Kidney (tissue), 22 donors: ENCODE measurements at regions of chr4 and their contacts with region 1.

Region 1: GRCh38 chr4:87848622-87849351 is 16.0 kb downstream of the MEPE start:
- DNase-seq: peak in 3 of 5 donors; percentile 38 to 72 (median 59)
- H3K4me3 ChIP-seq: peak overlapping the region in 2 of 3 donors; percentile 45 to 67
- H3K27ac ChIP-seq: peak overlapping the region in 1 of 2 donors; percentile 38
- H3K4me1 ChIP-seq: peaks cover 0 to 8% (median 6%) of the 10 kb centered on the region in 3 donors
- H3K27me3 ChIP-seq: no peaks in the 10 kb centered on the region
- CTCF ChIP-seq: peak; percentile 71

Region 2: DNA sequence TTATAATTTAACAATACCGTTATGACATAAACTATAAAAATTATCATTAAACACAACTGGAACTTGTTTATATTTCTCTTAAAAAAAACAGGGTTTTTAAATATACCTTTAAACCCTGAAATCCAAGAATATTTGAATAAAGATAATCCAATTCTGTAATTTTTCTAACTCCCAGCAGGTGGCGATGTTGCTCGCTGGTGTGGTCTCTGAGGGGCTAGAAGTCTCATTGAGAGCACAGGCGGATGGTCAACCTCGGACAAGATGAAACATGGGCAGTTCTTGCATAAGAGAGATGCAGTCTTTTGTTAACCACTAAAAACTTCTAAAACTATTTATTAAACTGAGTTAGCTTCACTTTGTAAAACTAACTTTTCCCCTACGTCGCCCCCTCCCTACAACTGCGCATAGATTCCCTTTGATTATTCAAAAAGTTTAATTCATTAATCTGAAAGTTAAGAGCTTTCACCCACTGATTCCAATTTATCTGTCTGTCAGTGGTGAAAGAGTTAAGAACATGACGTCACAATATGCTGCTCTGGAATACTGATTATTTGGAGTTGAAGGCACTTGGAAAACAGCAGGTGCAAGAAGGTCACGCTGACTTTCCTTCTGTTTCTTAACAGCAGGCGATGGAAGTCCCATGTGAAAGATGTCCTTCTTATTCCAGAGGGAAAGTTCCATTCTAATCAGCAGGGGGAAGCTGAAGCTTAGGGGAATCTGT is 169.2 kb before region 1 on chr4:
- intact Hi-C with region 1: loop called (anchors 10 kb)
- DNase-seq: peak in 4 of 5 donors; percentile 38 to 77 (median 56)
- H3K4me3 ChIP-seq: no peak overlapping the region
- H3K27ac ChIP-seq: no peak overlapping the region
- H3K4me1 ChIP-seq: no peaks in the 10 kb centered on the region
- H3K27me3 ChIP-seq: no peaks in the 10 kb centered on the region
- CTCF ChIP-seq: peak; percentile 64

Region 3: DNA sequence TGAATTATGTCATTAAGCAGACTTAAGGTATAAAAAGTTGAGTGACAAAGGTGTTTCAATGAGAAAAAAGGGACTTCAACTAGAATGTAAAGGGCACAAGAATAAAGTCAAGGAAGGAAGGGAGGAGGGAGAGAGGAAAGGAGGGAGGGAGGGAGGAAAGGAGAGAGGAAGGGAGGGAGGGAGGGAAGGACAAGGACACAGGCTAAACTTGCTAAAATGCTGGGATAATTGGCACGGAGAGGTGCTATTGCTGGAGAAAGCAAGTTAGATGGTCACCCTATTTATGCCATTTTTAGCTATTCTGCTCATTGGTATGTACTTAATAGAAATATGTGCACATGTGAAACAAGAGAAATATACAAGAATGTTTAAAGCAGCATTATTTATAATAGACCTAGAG is 81.8 kb after region 1 on chr4:
- intact Hi-C with region 1: no loop called
- DNase-seq: no peak
- H3K4me3 ChIP-seq: no peak overlapping the region
- H3K27ac ChIP-seq: no peak overlapping the region
- H3K4me1 ChIP-seq: no peaks in the 10 kb centered on the region
- H3K27me3 ChIP-seq: no peaks in the 10 kb centered on the region
- CTCF ChIP-seq: no peak

Region 4: DNA sequence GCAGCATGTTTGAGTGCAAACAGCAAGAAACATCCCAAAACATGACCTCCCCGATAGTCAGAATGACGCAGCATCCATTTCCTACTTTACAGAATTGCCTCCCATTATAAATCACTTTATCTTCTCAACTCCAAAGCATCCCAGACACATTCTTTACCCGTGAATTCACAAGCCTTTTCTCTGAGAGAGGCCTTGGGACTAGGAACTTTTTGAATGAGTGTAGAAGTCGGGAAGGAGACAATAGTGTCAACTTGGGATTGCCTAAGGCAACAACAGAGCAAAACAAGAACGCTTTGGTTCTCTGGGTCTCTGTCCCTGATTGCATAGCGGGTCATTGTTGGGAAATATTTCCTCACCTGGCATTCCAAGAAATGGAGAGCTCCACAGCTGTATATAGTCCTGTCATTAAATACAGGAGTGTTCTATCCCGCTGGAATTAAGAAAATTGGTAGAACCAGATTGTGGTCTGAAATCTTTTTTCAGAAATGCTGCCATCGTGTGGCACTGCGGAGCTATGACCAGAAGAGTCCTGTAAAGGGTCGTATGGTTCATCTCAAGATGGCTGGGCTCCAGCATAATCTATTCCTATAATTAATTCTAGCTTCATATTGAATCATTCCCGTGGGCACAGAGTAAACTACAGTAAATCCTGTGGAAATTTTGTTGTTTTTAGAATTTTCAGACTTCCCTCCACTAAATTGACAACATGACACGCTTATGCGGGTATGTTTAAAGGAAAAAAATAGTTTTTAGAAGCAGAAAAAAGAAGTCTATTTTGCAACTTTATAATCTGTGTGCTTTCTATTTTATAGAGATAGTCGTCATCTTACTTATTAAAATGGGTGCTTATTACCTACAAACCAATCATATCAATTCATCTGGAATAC is 124.7 kb after region 1 on chr4:
- intact Hi-C with region 1: loop called (anchors 10 kb)
- DNase-seq: peak in 4 of 5 donors; percentile 55 to 79 (median 68)
- H3K4me3 ChIP-seq: peak overlapping the region in 2 of 3 donors; percentile 7 to 44
- H3K27ac ChIP-seq: peak overlapping the region in 1 of 2 donors; percentile 55
- H3K4me1 ChIP-seq: peaks cover 0 to 18% (median 0%) of the 10 kb centered on the region in 3 donors
- H3K27me3 ChIP-seq: peaks cover 5% of the 10 kb centered on the region
- CTCF ChIP-seq: peak; percentile 74

Region 5: DNA sequence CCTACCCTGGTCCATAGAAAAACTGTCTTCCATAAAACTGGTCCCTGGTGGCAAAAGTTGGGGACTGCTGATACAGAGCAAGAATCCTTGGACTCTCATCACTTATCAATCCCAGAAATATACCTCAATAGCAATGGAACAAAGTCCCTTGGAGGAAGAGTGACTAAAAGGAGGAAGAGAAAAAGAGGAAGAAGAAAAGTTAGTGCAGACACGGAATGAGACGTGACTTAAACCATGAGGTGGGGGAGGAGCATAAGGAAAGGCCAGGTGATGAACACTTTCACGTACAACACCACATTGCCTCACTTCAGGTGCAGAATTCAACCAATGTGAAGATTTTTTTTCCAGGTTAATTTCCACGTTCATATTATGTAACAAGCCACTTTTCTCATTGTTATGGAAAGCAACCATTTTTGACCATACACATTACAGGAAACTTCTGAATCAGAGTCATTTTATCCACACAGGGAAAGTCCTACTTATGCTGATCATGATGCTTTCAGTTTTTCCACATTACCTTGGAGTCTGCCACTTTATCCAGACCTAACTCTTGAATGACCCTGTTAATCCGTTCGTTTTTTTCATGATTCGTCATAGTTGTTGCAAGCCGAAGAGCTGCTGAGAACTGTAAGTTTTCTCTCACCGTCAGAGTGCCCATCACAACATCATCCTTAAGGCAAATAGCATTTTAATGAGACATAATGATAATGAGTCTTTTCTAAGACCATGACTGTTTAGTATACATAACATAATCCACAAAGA is 281.9 kb after region 1 on chr4:
- intact Hi-C with region 1: no loop called
- DNase-seq: no peak
- H3K4me3 ChIP-seq: no peak overlapping the region
- H3K27ac ChIP-seq: no peak overlapping the region
- H3K4me1 ChIP-seq: no peaks in the 10 kb centered on the region
- H3K27me3 ChIP-seq: no peaks in the 10 kb centered on the region
- CTCF ChIP-seq: no peak